Activated CD4-positive, alpha-beta memory T cell treated with anti-CD3 and anti-CD28 coated beads for 36 hours (primary cell): ENCODE measurements at regions of chr2 and their contacts with region 1.

Region 1: GRCh38 chr2:8152392-8153257 is 529.2 kb upstream of the ID2 start:
- DNase-seq: no peak
- H3K4me3 Mint-ChIP-seq: no peak overlapping the region
- H3K27ac Mint-ChIP-seq: no peak overlapping the region
- H3K4me1 Mint-ChIP-seq: peaks cover 28% of the 10 kb centered on the region
- H3K27me3 Mint-ChIP-seq: no peaks in the 10 kb centered on the region

Region 2: DNA sequence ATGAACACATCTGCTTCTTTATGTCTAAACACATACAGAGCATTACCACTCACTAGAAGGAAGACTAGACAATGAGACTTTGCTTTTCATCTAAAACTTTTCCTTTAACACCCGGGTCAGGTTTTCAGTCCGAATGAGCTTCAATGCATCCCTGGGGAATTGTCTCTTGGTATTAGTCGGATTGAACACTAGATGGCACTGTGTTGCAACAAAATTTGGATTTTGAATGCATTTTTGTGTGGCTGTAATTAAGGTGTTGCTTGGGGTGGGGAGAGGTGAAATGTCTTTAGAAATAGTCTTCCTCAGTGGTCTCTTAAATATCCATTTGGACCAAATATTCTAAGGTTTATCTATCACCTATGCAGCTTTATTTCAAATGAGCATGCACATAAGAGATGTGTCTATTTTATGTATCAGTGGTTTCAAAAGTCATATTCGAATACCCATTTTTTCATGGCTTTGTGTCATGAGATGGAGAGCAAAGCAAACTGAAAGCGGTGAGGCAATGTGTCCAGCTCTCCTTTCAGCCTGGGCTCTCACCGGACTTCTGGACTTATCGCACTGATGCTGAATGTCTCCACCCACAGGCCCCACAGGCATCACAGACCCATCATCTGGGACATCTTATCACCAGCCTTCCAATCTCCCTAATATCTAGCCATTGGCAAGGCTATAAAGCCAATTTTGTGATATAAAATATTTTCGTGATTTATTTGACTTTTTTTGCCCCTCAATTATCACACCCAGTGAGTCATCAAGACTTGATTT is 725.1 kb before region 1 on chr2:
- CTCF ChIA-PET with region 1: no interaction called
- POLR2A ChIA-PET with region 1: no interaction called
- intact Hi-C with region 1: loop called (anchors 5 kb)
- DNase-seq: no peak
- H3K4me3 Mint-ChIP-seq: peak overlapping the region; percentile 35
- H3K27ac Mint-ChIP-seq: peak overlapping the region; percentile 68
- H3K4me1 Mint-ChIP-seq: peaks cover 38% of the 10 kb centered on the region
- H3K27me3 Mint-ChIP-seq: peaks cover 14% of the 10 kb centered on the region

Region 3: DNA sequence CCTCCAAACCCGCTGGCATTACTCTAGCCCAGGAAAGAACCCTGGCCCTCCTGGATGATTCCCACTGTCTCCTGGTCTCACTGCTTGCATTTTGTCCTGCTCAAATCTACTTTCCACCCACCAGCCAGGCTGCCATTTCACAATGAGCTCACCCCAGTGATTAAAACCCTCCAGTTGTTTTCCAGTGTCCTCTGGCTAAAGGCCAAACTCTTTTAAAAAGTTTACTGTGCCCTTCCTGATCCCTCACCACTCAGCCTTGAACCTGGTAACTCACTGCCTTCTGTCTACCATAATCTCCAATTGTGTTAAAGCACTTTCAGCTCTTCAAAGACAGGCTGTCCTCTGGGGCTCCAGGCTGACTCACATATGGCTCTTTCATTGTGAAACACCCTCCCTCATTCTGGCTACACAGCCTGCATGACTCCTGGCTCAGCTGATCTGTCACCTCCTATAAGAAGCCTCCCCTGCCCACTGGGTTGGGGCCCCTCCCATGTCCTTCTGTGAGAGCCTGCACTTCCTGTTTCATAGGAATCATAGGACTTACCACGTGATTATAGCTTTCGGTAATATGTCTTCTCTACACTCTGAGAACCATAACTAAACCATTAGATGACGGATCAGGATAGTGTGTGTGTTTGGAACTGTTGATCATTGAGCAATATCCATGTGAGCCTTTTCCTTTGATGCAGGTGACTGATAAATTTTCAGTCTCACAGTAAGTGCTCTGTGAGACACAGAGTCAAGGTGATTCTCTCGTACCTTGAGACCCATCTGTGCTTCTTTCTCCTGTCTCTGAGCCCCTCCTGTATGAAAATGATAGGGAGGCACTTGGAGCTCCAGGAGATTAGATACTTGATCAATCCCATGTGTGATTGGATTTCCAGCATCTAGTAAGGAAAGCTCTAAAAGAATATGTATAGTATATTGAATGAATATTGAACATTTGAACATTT is 61.6 kb before region 1 on chr2:
- CTCF ChIA-PET with region 1: no interaction called
- POLR2A ChIA-PET with region 1: no interaction called
- intact Hi-C with region 1: loop called (anchors 1 kb)
- DNase-seq: peak; percentile 90
- H3K4me3 Mint-ChIP-seq: no peak overlapping the region
- H3K27ac Mint-ChIP-seq: no peak overlapping the region
- H3K4me1 Mint-ChIP-seq: no peaks in the 10 kb centered on the region
- H3K27me3 Mint-ChIP-seq: no peaks in the 10 kb centered on the region

Region 4: GRCh38 chr2:8107621-8108378 is 44.8 kb before region 1 on chr2:
- CTCF ChIA-PET with region 1: no interaction called
- POLR2A ChIA-PET with region 1: no interaction called
- intact Hi-C with region 1: no loop called
- DNase-seq: no peak
- H3K4me3 Mint-ChIP-seq: no peak overlapping the region
- H3K27ac Mint-ChIP-seq: no peak overlapping the region
- H3K4me1 Mint-ChIP-seq: no peaks in the 10 kb centered on the region
- H3K27me3 Mint-ChIP-seq: peaks cover 2% of the 10 kb centered on the region

Region 5: GRCh38 chr2:8193686-8194615 is 41.3 kb after region 1 on chr2:
- CTCF ChIA-PET with region 1: no interaction called
- POLR2A ChIA-PET with region 1: no interaction called
- intact Hi-C with region 1: no loop called
- DNase-seq: no peak
- H3K4me3 Mint-ChIP-seq: no peak overlapping the region
- H3K27ac Mint-ChIP-seq: no peak overlapping the region
- H3K4me1 Mint-ChIP-seq: no peaks in the 10 kb centered on the region
- H3K27me3 Mint-ChIP-seq: no peaks in the 10 kb centered on the region

Region 6: DNA sequence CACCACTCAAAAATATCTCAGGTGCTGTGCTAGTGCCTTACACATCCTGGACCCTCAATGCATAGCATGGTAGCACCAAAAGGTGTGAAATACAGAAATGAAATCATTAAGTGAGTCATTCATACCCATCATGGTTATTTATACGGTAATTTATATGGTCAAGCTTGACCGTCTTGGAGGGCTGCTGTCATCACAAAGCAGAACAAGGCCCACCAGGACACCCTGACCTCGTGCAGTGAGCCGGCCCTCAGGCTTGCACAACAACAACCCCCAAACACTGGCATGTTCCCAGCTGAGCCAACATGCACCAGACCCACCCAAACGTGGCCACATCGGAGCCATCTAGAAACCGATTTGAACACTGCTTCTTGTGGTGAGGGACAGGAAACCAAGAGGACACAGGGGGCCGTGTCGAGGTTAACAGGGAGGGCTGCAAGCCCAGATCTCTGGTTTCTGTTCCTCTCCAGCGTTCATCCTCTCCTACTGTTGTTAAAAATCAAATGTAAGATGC is 150.8 kb after region 1 on chr2:
- CTCF ChIA-PET with region 1: no interaction called
- POLR2A ChIA-PET with region 1: no interaction called
- intact Hi-C with region 1: loop called (anchors 5 kb)
- DNase-seq: peak; percentile 81
- H3K4me3 Mint-ChIP-seq: no peak overlapping the region
- H3K27ac Mint-ChIP-seq: peak overlapping the region; percentile 16
- H3K4me1 Mint-ChIP-seq: peaks cover 62% of the 10 kb centered on the region
- H3K27me3 Mint-ChIP-seq: peaks cover 6% of the 10 kb centered on the region

Region 7: GRCh38 chr2:8408560-8409460 is 256.2 kb after region 1 on chr2:
- CTCF ChIA-PET with region 1: no interaction called
- POLR2A ChIA-PET with region 1: no interaction called
- intact Hi-C with region 1: loop called (anchors 1 kb)
- DNase-seq: peak; percentile 91
- H3K4me3 Mint-ChIP-seq: peak overlapping the region; percentile 0
- H3K27ac Mint-ChIP-seq: peak overlapping the region; percentile 79
- H3K4me1 Mint-ChIP-seq: peaks cover 34% of the 10 kb centered on the region
- H3K27me3 Mint-ChIP-seq: no peaks in the 10 kb centered on the region